ENCODE measurements at regions of chr15 and their contacts with region 1.

Region 1: GRCh38 chr15:86650093-86650492 is 570.4 kb downstream of the AGBL1 start:
- DNase-seq: peak in 1 of 14 experiments; percentile 19
- ATAC-seq: no peak
- H3K4me3 ChIP-seq: no peak overlapping the region
- H3K4me3 Mint-ChIP-seq: no peak overlapping the region
- H3K27ac ChIP-seq: no peak overlapping the region
- H3K27ac Mint-ChIP-seq: no peak overlapping the region
- H3K4me1 ChIP-seq: peaks cover 28% of the 10 kb centered on the region
- H3K4me1 Mint-ChIP-seq: peaks cover 47% of the 10 kb centered on the region
- H3K27me3 ChIP-seq: no peaks in the 10 kb centered on the region
- H3K27me3 Mint-ChIP-seq: no peaks in the 10 kb centered on the region
- CTCF ChIP-seq: no peak

Region 2: GRCh38 chr15:86611417-86612040 is 38.6 kb before region 1 on chr15:
- CTCF ChIA-PET with region 1: no interaction called
- POLR2A ChIA-PET with region 1: interaction called, 11 read pairs
- intact Hi-C with region 1: loop called in 1 of 2 experiments (anchors 5 kb)
- DNase-seq: peak in 5 of 14 experiments; percentile 7 to 76 (median 52)
- ATAC-seq: peak; percentile 82
- H3K4me3 ChIP-seq: no peak overlapping the region
- H3K4me3 Mint-ChIP-seq: peak overlapping the region; percentile 23
- H3K27ac ChIP-seq: no peak overlapping the region
- H3K27ac Mint-ChIP-seq: peak overlapping the region; percentile 6
- H3K4me1 ChIP-seq: peaks cover 39% of the 10 kb centered on the region
- H3K4me1 Mint-ChIP-seq: peaks cover 66% of the 10 kb centered on the region
- H3K27me3 ChIP-seq: no peaks in the 10 kb centered on the region
- H3K27me3 Mint-ChIP-seq: no peaks in the 10 kb centered on the region
- CTCF ChIP-seq: no peak

Measured in CD4-positive, alpha-beta T cell (primary cell).